Calu3 (cell line): ENCODE measurements at regions of chr9 and their contacts with region 1.

Region 1: DNA sequence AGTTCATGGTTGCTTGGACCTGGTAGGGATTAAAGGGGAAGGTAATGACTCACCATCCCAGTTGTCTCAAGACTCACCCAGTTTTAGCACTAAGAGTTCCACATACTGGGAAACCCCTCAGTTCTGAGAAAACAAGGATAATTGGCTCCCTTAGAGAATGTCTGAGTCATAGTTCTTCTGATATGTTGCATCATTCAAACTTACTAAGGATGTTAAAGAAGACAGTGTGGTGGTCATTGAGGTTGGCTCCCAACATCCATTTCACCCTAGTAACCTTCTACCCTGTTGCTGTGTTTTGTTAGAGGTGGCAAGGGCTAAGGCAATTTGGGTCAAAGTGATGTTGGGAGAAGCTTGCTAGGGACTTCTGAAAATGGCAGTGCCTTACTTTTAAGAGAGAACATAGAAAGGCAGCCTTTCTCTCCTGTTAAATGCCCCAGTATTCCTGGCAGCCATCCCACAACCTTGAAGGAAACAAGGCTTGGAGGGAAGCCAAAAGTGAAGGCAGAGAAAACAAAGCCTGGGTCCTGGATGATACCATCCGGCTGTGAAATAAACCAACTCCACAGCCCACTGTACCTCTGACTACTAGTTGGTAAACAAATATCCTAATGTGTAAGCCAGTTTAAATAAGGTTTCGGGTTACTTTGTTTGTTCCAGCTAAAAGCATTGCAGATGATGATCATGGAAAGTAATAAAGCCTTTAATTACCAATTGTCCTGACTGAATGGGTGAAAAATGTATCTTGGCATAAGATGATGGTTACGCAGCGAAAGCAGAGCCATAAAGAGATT is 80.4 kb upstream of the ADAMTSL1 start:
- DNase-seq: peak; percentile 72
- H3K4me3 Mint-ChIP-seq: peak overlapping the region; percentile 30
- H3K27ac Mint-ChIP-seq: peak overlapping the region; percentile 79
- H3K4me1 Mint-ChIP-seq: peaks cover 18% of the 10 kb centered on the region
- H3K27me3 Mint-ChIP-seq: no peaks in the 10 kb centered on the region
- CTCF ChIP-seq: no peak

Region 2: GRCh38 chr9:18071651-18072060 is 321.9 kb before region 1 on chr9:
- CTCF ChIA-PET with region 1: no interaction called
- intact Hi-C with region 1: no loop called
- DNase-seq: no peak
- H3K4me3 Mint-ChIP-seq: no peak overlapping the region
- H3K27ac Mint-ChIP-seq: no peak overlapping the region
- H3K4me1 Mint-ChIP-seq: peaks cover 8% of the 10 kb centered on the region
- H3K27me3 Mint-ChIP-seq: no peaks in the 10 kb centered on the region
- CTCF ChIP-seq: no peak

Region 3: DNA sequence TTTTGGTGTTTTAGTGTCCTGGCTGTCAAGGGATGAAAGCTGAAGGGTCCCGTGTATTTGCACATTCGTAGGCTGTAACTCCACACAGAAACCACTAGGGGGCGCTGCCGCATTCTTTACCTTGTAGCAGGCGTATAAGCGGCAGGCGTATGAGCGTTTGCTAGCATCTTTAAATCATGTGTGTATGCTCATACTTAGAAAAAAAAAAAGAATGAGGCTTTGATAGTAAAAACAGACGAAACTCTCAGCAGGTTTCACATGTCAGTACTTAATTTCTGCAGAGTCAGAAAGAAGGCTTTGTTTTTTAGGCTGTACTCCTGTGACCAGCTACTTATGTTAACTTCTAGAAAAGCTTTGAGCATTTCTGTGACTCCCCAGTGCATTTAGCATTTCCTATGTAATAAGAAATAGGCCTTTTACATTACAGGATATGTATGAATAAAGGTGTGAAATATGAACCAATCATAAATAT is 138.3 kb before region 1 on chr9:
- CTCF ChIA-PET with region 1: interaction called, 14 read pairs
- intact Hi-C with region 1: loop called (anchors 1 kb)
- DNase-seq: peak; percentile 72
- H3K4me3 Mint-ChIP-seq: no peak overlapping the region
- H3K27ac Mint-ChIP-seq: no peak overlapping the region
- H3K4me1 Mint-ChIP-seq: no peaks in the 10 kb centered on the region
- H3K27me3 Mint-ChIP-seq: no peaks in the 10 kb centered on the region
- CTCF ChIP-seq: peak; percentile 63

Region 4: DNA sequence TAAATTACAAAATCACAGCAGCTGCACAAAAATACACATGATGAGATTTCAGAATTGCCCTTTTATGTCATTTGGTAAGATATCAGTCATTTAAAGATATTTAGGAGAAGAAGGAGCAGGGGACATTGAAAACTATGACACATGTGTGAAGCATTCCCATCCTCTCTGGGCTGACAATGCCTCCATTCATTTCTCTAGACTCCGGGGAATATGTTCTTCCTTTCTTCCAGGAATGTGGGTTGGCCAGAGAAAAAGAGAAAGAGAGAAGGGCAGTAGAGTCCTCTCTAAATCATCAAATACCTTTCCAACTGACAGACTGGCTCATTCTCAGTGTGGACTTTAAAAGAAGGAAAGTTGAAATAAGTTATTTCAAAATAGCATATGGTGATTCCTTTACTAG is 125.2 kb before region 1 on chr9:
- CTCF ChIA-PET with region 1: no interaction called
- intact Hi-C with region 1: loop called (anchors 2 kb)
- DNase-seq: peak; percentile 12
- H3K4me3 Mint-ChIP-seq: no peak overlapping the region
- H3K27ac Mint-ChIP-seq: no peak overlapping the region
- H3K4me1 Mint-ChIP-seq: peaks cover 6% of the 10 kb centered on the region
- H3K27me3 Mint-ChIP-seq: no peaks in the 10 kb centered on the region
- CTCF ChIP-seq: no peak

Region 5: DNA sequence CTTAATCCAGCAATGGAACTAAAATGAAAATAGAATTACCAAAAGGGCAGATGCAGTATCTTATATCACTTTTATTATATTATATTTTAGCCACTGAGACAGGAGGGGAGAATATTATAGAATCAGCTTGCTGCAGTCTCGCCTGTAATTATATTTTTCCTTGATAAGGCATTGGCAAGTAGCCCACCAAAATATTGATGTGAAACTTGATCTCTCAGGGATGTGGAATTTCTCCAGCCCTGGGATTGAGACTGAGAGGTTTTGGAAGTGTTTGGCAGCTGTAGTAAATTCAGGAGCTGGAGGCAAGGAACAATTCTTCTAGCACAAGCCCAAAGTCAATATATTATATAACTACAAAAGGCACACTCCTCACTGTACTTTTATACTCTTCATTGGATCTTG is 61.7 kb before region 1 on chr9:
- CTCF ChIA-PET with region 1: no interaction called
- intact Hi-C with region 1: loop called (anchors 10 kb)
- DNase-seq: no peak
- H3K4me3 Mint-ChIP-seq: no peak overlapping the region
- H3K27ac Mint-ChIP-seq: no peak overlapping the region
- H3K4me1 Mint-ChIP-seq: peaks cover 14% of the 10 kb centered on the region
- H3K27me3 Mint-ChIP-seq: no peaks in the 10 kb centered on the region
- CTCF ChIP-seq: no peak

Region 6: DNA sequence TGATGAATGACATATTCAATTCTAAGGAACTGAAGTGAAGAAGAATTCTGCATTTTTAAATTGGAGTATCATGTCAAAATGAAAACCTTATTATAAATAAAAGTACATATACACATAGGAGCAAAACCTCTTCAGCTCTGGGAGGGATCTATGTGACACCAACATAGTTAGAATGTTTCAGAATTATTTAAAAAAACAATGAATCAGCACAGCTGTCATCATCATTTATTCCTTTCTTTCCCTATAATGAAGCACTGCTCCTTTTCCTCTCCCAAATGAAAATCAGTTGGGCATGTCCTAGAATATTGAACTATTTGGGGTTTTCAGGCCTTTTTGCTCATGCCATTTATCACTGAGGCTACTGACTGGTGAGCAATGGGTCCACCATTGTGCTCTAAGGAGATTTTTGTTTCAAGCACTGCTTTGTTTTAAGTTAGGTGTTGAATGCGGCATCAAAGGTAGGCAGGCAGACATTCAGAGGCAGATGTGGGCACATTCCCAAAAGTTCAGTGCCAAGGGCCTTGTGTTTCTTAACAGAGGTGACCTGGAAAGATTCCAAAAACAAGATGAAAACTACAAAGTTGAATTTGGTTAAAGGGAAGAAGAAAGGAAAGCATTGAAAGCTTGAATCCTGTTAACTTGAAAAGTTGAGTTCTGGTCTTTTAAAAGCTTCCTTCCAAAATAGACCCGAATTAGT is 46.0 kb before region 1 on chr9:
- CTCF ChIA-PET with region 1: no interaction called
- intact Hi-C with region 1: loop called (anchors 1 kb)
- DNase-seq: no peak
- H3K4me3 Mint-ChIP-seq: no peak overlapping the region
- H3K27ac Mint-ChIP-seq: no peak overlapping the region
- H3K4me1 Mint-ChIP-seq: peaks cover 21% of the 10 kb centered on the region
- H3K27me3 Mint-ChIP-seq: no peaks in the 10 kb centered on the region
- CTCF ChIP-seq: no peak

Region 7: GRCh38 chr9:18429070-18429469 is 35.5 kb after region 1 on chr9:
- CTCF ChIA-PET with region 1: no interaction called
- intact Hi-C with region 1: no loop called
- DNase-seq: no peak
- H3K4me3 Mint-ChIP-seq: no peak overlapping the region
- H3K27ac Mint-ChIP-seq: no peak overlapping the region
- H3K4me1 Mint-ChIP-seq: peaks cover 11% of the 10 kb centered on the region
- H3K27me3 Mint-ChIP-seq: no peaks in the 10 kb centered on the region
- CTCF ChIP-seq: no peak

Region 8: GRCh38 chr9:18442629-18443491 is 49.3 kb after region 1 on chr9:
- CTCF ChIA-PET with region 1: no interaction called
- intact Hi-C with region 1: loop called (anchors 5 kb)
- DNase-seq: peak; percentile 66
- H3K4me3 Mint-ChIP-seq: no peak overlapping the region
- H3K27ac Mint-ChIP-seq: no peak overlapping the region
- H3K4me1 Mint-ChIP-seq: peaks cover 12% of the 10 kb centered on the region
- H3K27me3 Mint-ChIP-seq: no peaks in the 10 kb centered on the region
- CTCF ChIP-seq: peak; percentile 61